IMR-90 (cell line): ENCODE measurements at regions of chr1 and their contacts with region 1.

Region 1: DNA sequence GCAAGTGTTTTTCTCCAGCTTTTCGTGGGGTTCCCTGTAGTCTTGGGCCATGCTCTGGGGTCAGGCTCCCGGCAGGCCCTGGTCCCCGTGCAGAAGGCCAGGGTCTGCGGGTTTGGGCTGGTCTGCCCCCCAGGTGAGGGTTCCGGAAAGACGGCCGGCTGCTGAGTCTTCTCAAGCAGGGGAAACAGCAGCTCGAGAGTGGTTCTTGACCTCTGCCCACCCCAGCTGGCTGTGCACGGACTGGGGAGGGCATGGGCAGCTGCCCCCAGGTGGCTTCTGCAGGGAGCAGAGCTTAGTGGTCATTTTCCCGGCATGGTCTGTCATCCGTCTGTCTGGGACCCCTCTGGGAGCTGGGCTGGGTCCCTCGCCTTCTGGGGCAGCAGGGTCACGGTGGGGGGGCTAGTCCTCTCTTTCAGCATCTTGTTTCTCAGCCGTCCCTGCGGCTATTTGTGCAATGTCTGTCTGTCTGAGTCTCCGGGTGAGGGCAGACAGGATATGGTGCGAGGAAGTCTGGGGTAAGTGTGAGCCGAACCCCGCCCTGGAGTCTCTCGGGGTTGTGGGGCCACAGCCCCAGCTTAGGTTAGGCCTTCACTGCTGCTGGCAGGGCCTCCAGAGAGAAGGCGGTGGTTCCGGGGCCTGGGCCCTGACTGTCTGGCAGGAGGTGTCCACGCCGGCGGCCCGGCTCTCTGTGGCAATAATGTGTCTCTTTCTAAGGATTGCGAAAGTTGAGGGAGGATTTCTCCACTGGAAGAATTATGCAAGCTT is 6.1 kb downstream of the SKI start:
- DNase-seq: peak; percentile 87
- ATAC-seq: peak; percentile 43
- H3K4me3 ChIP-seq: no peak overlapping the region
- H3K27ac ChIP-seq: peak overlapping the region; percentile 74
- H3K4me1 ChIP-seq: peaks cover 46% of the 10 kb centered on the region
- H3K27me3 ChIP-seq: no peaks in the 10 kb centered on the region
- CTCF ChIP-seq: no peak
- POLR2A ChIP-seq: no peak
- RAD21 ChIP-seq: no peak

Region 2: GRCh38 chr1:2194898-2195673 is 39.1 kb before region 1 on chr1:
- CTCF ChIA-PET with region 1: interaction called, 7 read pairs
- POLR2A ChIA-PET with region 1: interaction called, 6 read pairs
- dilution Hi-C with region 1: no loop called
- in situ Hi-C with region 1: loop called (anchors 5 kb)
- intact Hi-C with region 1: loop called (anchors 1 kb)
- DNase-seq: peak; percentile 77
- ATAC-seq: peak; percentile 80
- H3K4me3 ChIP-seq: peak overlapping the region; percentile 57
- H3K27ac ChIP-seq: peak overlapping the region; percentile 95
- H3K4me1 ChIP-seq: peaks cover 32% of the 10 kb centered on the region
- H3K27me3 ChIP-seq: no peaks in the 10 kb centered on the region
- CTCF ChIP-seq: peak; percentile 93
- POLR2A ChIP-seq: peak; percentile 19; the same call in 1 of the 2 replicates
- RAD21 ChIP-seq: peak; percentile 98

Region 3: DNA sequence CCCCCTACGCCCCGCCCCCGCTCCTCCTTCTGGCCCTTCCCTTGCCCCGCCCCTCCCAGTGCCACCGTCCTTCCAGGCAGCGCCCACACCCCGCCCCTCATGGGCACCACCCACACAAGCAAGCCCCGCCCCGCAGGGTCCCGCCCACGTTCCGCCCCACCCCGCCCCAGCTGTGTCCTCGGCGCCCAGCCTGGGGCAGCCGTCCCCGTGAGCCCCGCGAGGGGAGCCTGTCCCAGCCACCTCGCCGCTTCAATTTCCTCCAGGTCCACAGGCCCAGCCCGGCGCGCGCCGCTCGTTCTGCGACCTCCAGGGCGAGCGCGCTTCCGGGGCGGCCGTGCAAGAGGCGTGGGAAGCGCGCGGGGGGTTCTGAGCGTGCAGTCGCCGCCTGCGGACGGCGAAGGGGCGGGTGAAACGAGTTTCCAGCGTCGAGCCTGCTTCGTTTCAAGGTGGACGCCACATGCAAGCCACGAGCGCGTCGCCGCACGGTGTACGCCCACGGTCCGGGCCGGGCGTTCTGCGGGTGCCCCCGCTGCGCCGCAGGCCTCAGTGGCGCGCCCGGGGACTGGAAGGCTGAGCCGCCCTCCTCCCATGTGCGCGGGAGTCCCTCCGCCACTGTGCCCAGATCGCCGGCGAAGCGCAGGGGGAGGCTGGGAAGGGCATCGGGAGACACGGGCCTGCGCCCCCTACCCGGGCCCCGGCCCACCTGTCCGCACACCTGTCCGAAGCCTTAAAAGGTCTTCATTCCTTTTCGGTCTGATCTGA is 28.8 kb before region 1 on chr1:
- CTCF ChIA-PET with region 1: no interaction called
- POLR2A ChIA-PET with region 1: interaction called, 9 read pairs
- dilution Hi-C with region 1: no loop called
- in situ Hi-C with region 1: no loop called
- intact Hi-C with region 1: loop called (anchors 2 kb)
- DNase-seq: peak; percentile 92
- ATAC-seq: peak; percentile 88
- H3K4me3 ChIP-seq: peak overlapping the region; percentile 46
- H3K27ac ChIP-seq: peak overlapping the region; percentile 21; the same call in 1 of the 2 replicates
- H3K4me1 ChIP-seq: peaks cover 42% of the 10 kb centered on the region
- H3K27me3 ChIP-seq: no peaks in the 10 kb centered on the region
- CTCF ChIP-seq: no peak
- POLR2A ChIP-seq: no peak
- RAD21 ChIP-seq: no peak; the same call in 1 of the 2 replicates

Region 4: GRCh38 chr1:2279210-2279639 is 45.0 kb after region 1 on chr1:
- CTCF ChIA-PET with region 1: no interaction called
- POLR2A ChIA-PET with region 1: no interaction called
- dilution Hi-C with region 1: no loop called
- in situ Hi-C with region 1: no loop called
- intact Hi-C with region 1: loop called (anchors 5 kb)
- DNase-seq: peak; percentile 94
- ATAC-seq: peak; percentile 88
- H3K4me3 ChIP-seq: no peak overlapping the region
- H3K27ac ChIP-seq: peak overlapping the region; percentile 95
- H3K4me1 ChIP-seq: peaks cover 50% of the 10 kb centered on the region
- H3K27me3 ChIP-seq: no peaks in the 10 kb centered on the region
- CTCF ChIP-seq: no peak
- POLR2A ChIP-seq: no peak
- RAD21 ChIP-seq: no peak

Region 5: GRCh38 chr1:2290595-2291510 is 56.7 kb after region 1 on chr1:
- CTCF ChIA-PET with region 1: no interaction called
- POLR2A ChIA-PET with region 1: no interaction called
- dilution Hi-C with region 1: no loop called
- in situ Hi-C with region 1: loop called (anchors 5 kb)
- intact Hi-C with region 1: loop called (anchors 2 kb)
- DNase-seq: peak; percentile 98
- ATAC-seq: peak; percentile 77
- H3K4me3 ChIP-seq: peak overlapping the region; percentile 14; the same call in 1 of the 2 replicates
- H3K27ac ChIP-seq: peak overlapping the region; percentile 98
- H3K4me1 ChIP-seq: peaks cover 50% of the 10 kb centered on the region
- H3K27me3 ChIP-seq: no peaks in the 10 kb centered on the region
- CTCF ChIP-seq: no peak
- POLR2A ChIP-seq: no peak; the same call in 1 of the 2 replicates
- RAD21 ChIP-seq: no peak

Region 6: GRCh38 chr1:2300851-2301606 is 66.8 kb after region 1 on chr1:
- CTCF ChIA-PET with region 1: no interaction called
- POLR2A ChIA-PET with region 1: no interaction called
- dilution Hi-C with region 1: no loop called
- in situ Hi-C with region 1: loop called (anchors 5 kb)
- intact Hi-C with region 1: loop called (anchors 1 kb)
- DNase-seq: peak; percentile 67
- ATAC-seq: peak; percentile 64
- H3K4me3 ChIP-seq: no peak overlapping the region
- H3K27ac ChIP-seq: peak overlapping the region; percentile 84
- H3K4me1 ChIP-seq: peaks cover 26% of the 10 kb centered on the region
- H3K27me3 ChIP-seq: no peaks in the 10 kb centered on the region
- CTCF ChIP-seq: no peak
- POLR2A ChIP-seq: 0 out of 2 replicates have a peak, but pooled peaks have one; percentile 13
- RAD21 ChIP-seq: no peak

Region 7: GRCh38 chr1:2381741-2382620 is 147.8 kb after region 1 on chr1:
- CTCF ChIA-PET with region 1: interaction called, 4 read pairs
- POLR2A ChIA-PET with region 1: interaction called, 4 read pairs
- dilution Hi-C with region 1: no loop called
- in situ Hi-C with region 1: no loop called
- intact Hi-C with region 1: loop called (anchors 1 kb)
- DNase-seq: peak; percentile 70
- ATAC-seq: peak; percentile 99
- H3K4me3 ChIP-seq: no peak overlapping the region
- H3K27ac ChIP-seq: no peak overlapping the region
- H3K4me1 ChIP-seq: no peaks in the 10 kb centered on the region
- H3K27me3 ChIP-seq: no peaks in the 10 kb centered on the region
- CTCF ChIP-seq: peak; percentile 97
- POLR2A ChIP-seq: no peak
- RAD21 ChIP-seq: peak; percentile 99

Region 8: GRCh38 chr1:2514863-2515762 is 280.9 kb after region 1 on chr1:
- CTCF ChIA-PET with region 1: no interaction called
- POLR2A ChIA-PET with region 1: no interaction called
- dilution Hi-C with region 1: no loop called
- in situ Hi-C with region 1: no loop called
- intact Hi-C with region 1: no loop called
- DNase-seq: no peak
- ATAC-seq: no peak
- H3K4me3 ChIP-seq: no peak overlapping the region
- H3K27ac ChIP-seq: no peak overlapping the region
- H3K4me1 ChIP-seq: no peaks in the 10 kb centered on the region
- H3K27me3 ChIP-seq: no peaks in the 10 kb centered on the region
- CTCF ChIP-seq: 0 out of 2 replicates have a peak, but pooled peaks have one; percentile 11
- POLR2A ChIP-seq: no peak
- RAD21 ChIP-seq: peak; percentile 8; the same call in 1 of the 2 replicates